Ovary (tissue), 10 donors: ENCODE measurements at regions of chr11 and their contacts with region 1.

Region 1: DNA sequence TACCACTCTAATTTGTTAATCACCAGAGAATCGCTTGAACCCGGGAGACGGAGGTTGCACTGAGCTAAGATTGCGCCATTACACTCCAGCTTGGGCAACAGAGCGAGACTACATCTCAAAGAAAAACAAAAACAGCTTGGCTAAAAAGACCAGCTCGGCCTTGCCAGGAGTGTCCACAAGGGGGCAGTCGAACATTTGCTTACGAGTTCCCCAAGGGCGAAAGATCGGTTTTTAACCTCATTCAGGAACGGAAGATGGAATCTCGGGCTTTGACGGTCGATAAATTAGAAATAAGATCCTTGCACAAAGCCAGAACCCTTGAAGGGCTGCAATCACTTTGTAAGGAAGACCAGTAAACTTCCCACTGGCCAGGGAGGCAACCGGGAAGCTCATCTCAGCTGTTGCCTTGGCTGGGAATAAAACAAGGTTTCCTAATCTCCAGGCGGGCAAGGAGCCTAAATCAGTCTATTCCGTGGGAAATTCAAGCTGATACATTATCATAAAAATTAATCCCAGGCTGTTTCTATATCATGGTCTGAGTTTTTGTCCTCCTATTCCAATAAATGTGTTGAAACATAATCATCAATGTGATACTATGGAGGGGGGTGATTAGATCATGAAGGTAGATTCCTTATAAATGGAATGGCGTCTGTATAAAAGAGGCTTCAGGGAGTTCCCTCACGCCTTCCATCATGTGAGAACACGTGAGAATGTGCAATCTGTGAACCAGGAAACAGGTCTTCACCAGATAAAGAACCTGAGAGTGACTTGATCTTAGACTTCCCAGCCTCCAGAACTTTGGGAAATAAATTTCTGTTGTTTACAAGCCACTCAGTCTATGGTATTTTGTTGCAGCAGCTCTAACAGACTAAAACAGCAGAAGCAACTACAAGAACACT is 14.9 kb upstream of the SLC29A2 start:
- DNase-seq: peak; percentile 68 to 85 (median 79)
- H3K4me3 ChIP-seq: peak overlapping the region; percentile 8
- H3K27ac ChIP-seq: no peak overlapping the region
- H3K4me1 ChIP-seq: peaks cover 2% of the 10 kb centered on the region
- H3K27me3 ChIP-seq: no peaks in the 10 kb centered on the region
- CTCF ChIP-seq: peak; percentile 54 to 78 (median 61)
- EP300 ChIP-seq: no peak
- POLR2A ChIP-seq: no peak

Region 2: GRCh38 chr11:66302656-66303055 is 83.8 kb before region 1 on chr11:
- intact Hi-C with region 1: loop called in 1 of 4 experiments (anchors 10 kb)
- DNase-seq: no peak
- H3K4me3 ChIP-seq: no peak overlapping the region
- H3K27ac ChIP-seq: no peak overlapping the region
- H3K4me1 ChIP-seq: no peaks in the 10 kb centered on the region
- H3K27me3 ChIP-seq: no peaks in the 10 kb centered on the region
- CTCF ChIP-seq: no peak
- EP300 ChIP-seq: no peak
- POLR2A ChIP-seq: no peak